ENCODE measurements at regions of chrX and their contacts with region 1.

Region 1: DNA sequence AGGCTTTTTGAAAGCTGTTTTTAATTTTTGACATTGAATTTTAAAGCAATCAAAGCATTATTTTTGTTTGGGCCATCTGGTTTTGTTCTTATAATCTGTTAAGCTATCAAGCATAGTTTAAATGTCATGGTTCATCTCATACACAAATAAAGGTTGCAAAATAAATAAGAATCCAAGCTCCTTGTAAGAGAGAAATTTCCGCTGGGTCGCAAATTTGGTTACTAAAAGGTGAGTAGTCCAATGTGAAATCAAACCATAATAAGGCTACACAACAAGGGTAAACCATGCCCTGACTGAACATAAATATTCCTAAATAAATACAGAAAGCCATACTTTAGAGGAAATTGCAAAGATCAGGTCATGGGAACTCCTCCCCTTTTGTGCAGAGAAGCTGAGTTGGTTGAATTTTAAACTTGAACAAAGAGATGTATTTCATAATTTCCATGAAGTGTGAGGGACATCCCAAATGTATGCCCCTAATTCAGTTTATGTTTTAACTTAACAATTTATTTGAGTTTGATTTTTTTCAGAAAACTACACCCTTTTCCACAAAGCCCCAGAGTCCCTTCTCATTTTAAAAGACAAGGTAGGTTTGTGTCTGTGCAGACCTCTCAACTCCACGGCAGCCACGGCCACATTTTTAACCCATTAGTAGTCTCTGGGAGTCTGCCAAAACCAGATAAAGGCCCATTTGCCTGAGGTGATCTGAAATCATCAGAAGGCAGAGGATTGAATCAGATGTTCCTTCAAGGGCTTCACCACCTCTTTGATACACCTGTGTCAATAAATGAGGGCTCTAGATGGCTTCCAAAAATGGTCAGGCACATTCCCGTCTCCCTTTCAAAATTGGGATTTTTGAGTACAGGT is 85.2 kb downstream of the PLAC1 start:
- DNase-seq: peak; percentile 92
- ATAC-seq: peak; percentile 51
- H3K4me3 ChIP-seq: peak overlapping the region; percentile 33; the same call in 1 of the 2 replicates
- H3K27ac ChIP-seq: peak overlapping the region; percentile 67
- H3K4me1 ChIP-seq: peaks cover 69% of the 10 kb centered on the region
- H3K27me3 ChIP-seq: no peaks in the 10 kb centered on the region
- CTCF ChIP-seq: no peak

Region 2: DNA sequence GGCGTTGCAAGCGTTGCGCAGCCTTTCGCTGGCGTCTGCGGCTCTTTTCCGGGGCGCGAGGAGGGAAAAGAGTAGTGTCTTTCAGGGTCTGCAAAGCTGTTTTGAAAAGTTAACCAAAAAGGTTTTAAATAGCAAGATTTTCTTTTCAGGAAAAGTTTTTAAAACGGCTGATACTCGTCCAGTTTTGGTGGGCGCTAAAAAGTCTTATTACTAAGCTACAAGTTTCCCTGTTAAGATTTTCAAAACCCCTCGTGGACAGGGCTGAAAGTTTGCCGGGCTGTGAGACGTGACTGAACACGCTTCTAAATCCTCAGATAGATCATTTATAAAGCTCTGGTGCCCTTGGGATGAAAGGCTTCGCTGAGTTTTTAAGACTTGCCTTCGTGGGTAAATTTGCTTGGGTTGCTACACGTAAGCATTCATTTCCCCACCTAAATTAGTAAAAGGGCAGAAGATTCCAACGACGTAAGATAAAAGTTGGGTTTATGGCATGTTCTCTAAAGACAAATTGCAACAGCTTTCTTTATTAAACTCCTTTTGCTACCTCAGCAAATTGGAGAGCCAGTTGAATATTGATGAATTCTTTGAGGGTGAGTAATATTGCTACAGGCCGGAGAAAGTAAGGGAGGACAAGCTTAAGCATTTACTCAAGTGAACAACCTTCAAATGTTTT is 21.5 kb before region 1 on chrX:
- CTCF ChIA-PET with region 1: interaction called, 3 read pairs
- POLR2A ChIA-PET with region 1: interaction called, 6 read pairs
- intact Hi-C with region 1: loop called (anchors 2 kb)
- DNase-seq: peak; percentile 68
- ATAC-seq: no peak
- H3K4me3 ChIP-seq: no peak overlapping the region
- H3K27ac ChIP-seq: no peak overlapping the region
- H3K4me1 ChIP-seq: peaks cover 35% of the 10 kb centered on the region
- H3K27me3 ChIP-seq: no peaks in the 10 kb centered on the region
- CTCF ChIP-seq: no peak